ENCODE measurements at regions of chr6 and their contacts with region 1.

Region 1: GRCh38 chr6:129790785-129791184 is 70.3 kb downstream of the TMEM244 start:
- DNase-seq: no peak
- ATAC-seq: no peak
- H3K4me3 Mint-ChIP-seq: no peak overlapping the region
- H3K27ac Mint-ChIP-seq: no peak overlapping the region
- H3K4me1 Mint-ChIP-seq: peaks cover 6% of the 10 kb centered on the region
- H3K27me3 Mint-ChIP-seq: peaks cover 13% of the 10 kb centered on the region

Region 2: GRCh38 chr6:129774697-129775447 is 15.9 kb before region 1 on chr6:
- CTCF ChIA-PET with region 1: interaction called, 10 read pairs
- POLR2A ChIA-PET with region 1: no interaction called
- DNase-seq: peak; percentile 64
- ATAC-seq: peak; percentile 36
- H3K4me3 Mint-ChIP-seq: no peak overlapping the region
- H3K27ac Mint-ChIP-seq: no peak overlapping the region
- H3K4me1 Mint-ChIP-seq: peaks cover 8% of the 10 kb centered on the region
- H3K27me3 Mint-ChIP-seq: peaks cover 16% of the 10 kb centered on the region

Region 3: GRCh38 chr6:129812145-129812777 is 21.5 kb after region 1 on chr6:
- CTCF ChIA-PET with region 1: no interaction called
- POLR2A ChIA-PET with region 1: no interaction called
- DNase-seq: no peak
- ATAC-seq: no peak
- H3K4me3 Mint-ChIP-seq: no peak overlapping the region
- H3K27ac Mint-ChIP-seq: no peak overlapping the region
- H3K4me1 Mint-ChIP-seq: no peaks in the 10 kb centered on the region
- H3K27me3 Mint-ChIP-seq: peaks cover 10% of the 10 kb centered on the region